AG04450 (cell line): ENCODE measurements at regions of chr3 and their contacts with region 1.

Region 1: GRCh38 chr3:151008699-151009098 is 36.2 kb upstream of the CLRN1 start:
- DNase-seq: peak; percentile 21
- H3K4me3 ChIP-seq: no peak overlapping the region
- H3K27ac ChIP-seq: no peak overlapping the region
- H3K27me3 ChIP-seq: peaks cover 3% of the 10 kb centered on the region
- CTCF ChIP-seq: peak; percentile 70

Region 2: GRCh38 chr3:151086484-151087456 is 78.1 kb after region 1 on chr3:
- CTCF ChIA-PET with region 1: interaction called, 39 read pairs
- POLR2A ChIA-PET with region 1: no interaction called
- DNase-seq: peak; percentile 65
- H3K4me3 ChIP-seq: peak overlapping the region; percentile 60
- H3K27ac ChIP-seq: no peak overlapping the region
- H3K27me3 ChIP-seq: peaks cover 40% of the 10 kb centered on the region
- CTCF ChIP-seq: peak; percentile 68

Region 3: DNA sequence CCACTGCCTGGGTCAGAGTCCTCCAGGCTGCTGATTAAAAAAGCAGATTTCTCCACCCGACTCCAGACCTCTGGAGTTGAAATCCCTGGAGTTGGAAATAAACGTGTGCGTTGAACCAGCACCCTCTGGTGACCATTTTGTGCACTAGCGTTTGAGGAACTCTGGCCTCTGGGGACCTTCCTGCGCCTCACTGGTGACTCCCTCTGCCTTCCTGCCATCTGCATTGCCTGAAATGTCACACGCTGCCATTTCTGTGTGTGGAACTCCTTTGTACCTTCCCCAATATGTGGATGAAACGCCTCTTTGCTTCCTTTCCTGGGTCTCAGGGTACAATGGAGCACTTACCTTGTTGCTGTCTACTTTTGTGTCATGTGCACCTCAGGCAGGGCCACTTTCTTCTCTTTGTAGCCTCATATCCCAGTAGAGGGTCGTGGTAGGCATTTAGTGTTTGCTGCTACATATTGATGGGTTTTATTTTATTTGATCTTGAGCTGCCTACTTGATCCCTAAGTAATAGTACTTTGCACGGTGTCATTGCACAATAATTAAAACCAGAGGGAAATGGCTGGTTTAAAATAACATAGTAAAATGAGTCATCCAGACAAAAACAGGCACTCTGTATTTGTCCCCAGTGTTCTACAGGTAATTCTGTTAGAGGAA is 137.5 kb after region 1 on chr3:
- CTCF ChIA-PET with region 1: interaction called, 74 read pairs
- POLR2A ChIA-PET with region 1: no interaction called
- DNase-seq: peak; percentile 36
- H3K4me3 ChIP-seq: no peak overlapping the region
- H3K27ac ChIP-seq: no peak overlapping the region
- H3K27me3 ChIP-seq: peaks cover 5% of the 10 kb centered on the region
- CTCF ChIP-seq: peak; percentile 94

Region 4: GRCh38 chr3:151290673-151291072 is 282.0 kb after region 1 on chr3:
- CTCF ChIA-PET with region 1: no interaction called
- POLR2A ChIA-PET with region 1: no interaction called
- DNase-seq: no peak
- H3K4me3 ChIP-seq: no peak overlapping the region
- H3K27ac ChIP-seq: no peak overlapping the region
- H3K27me3 ChIP-seq: no peaks in the 10 kb centered on the region
- CTCF ChIP-seq: peak; percentile 64